Psoas muscle (tissue), 8 donors: ENCODE measurements at regions of chr14 and their contacts with region 1.

Region 1: GRCh38 chr14:22319526-22320361 is 269.3 kb downstream of the DAD1 start:
- DNase-seq: no peak
- ATAC-seq: peak in 2 of 4 donors; percentile 48 to 59
- H3K4me3 ChIP-seq: no peak overlapping the region
- H3K27ac ChIP-seq: no peak overlapping the region
- H3K4me1 ChIP-seq: no peaks in the 10 kb centered on the region
- H3K27me3 ChIP-seq: no peaks in the 10 kb centered on the region
- CTCF ChIP-seq: peak; percentile 54

Region 2: GRCh38 chr14:22370084-22370847 is 50.5 kb after region 1 on chr14:
- intact Hi-C with region 1: loop called in 1 of 2 experiments (anchors 5 kb)
- DNase-seq: no peak
- ATAC-seq: peak; percentile 70 to 88 (median 81)
- H3K4me3 ChIP-seq: no peak overlapping the region
- H3K27ac ChIP-seq: no peak overlapping the region
- H3K4me1 ChIP-seq: no peaks in the 10 kb centered on the region
- H3K27me3 ChIP-seq: no peaks in the 10 kb centered on the region
- CTCF ChIP-seq: no peak

Region 3: GRCh38 chr14:22375321-22375930 is 55.7 kb after region 1 on chr14:
- intact Hi-C with region 1: loop called (anchors 2 to 5 kb)
- DNase-seq: no peak
- ATAC-seq: no peak
- H3K4me3 ChIP-seq: no peak overlapping the region
- H3K27ac ChIP-seq: no peak overlapping the region
- H3K4me1 ChIP-seq: no peaks in the 10 kb centered on the region
- H3K27me3 ChIP-seq: no peaks in the 10 kb centered on the region
- CTCF ChIP-seq: peak; percentile 44